Left cardiac atrium (tissue), 4 donors: ENCODE measurements at regions of chr1 and their contacts with region 1.

Region 1: DNA sequence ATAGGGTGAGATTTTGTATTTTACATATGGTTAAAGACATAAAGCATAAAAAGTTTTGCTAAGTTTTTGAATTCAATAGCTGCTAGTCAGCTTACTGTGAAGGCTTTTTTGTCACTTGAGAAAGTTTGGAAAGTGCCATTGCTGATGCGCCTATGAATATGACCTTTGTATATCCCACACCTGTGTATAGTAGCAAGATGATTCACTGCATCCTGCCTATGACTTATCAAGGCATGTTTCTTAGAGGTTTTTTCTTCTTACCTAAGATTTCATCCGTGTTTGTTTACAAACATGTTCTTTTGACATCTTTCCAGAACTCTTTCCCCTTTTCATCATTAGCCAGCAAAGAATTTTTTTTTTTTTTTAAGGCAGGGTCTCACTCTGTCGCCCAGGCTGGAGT is 51.5 kb downstream of the PRKAA2 start:
- DNase-seq: no peak
- ATAC-seq: no peak

Region 2: DNA sequence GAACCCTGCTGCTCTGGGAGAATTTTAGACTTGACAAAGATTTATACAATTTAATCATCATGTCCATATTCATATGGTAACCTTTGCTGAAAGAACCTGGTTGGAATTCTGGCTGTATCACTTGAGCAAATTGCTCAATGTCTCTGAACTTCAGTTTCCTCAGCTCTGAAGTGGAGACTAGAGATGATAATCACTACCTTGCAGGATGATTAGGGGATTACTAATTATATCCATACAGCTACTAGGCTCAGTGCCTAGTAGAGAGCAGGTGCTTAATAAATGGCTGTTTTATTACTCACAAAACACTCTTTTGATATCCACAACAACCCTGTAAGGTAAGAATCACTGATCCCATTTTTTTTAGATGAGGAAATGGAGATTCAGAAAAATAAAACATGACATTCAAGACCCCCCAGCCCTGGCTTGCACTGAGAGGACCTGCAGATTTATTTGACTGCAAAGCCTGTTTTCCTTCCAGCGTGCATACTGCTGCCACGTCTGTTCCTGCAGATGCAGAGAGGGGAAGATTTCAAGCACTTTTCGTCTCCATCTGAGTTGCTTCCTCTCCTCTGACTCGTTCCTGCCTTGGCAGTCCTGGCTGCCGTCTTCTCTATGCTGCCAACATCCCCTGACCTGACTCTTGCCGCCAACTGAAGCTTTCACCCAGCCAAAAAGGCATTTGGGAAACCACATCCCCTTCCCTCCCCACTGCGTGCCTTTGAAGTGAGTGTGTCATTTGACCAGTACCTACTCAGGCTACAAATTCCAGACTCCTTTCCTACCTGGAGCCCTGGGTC is 320.3 kb before region 1 on chr1:
- intact Hi-C with region 1: no loop called
- DNase-seq: peak; percentile 50
- ATAC-seq: peak; percentile 46 to 80

Region 3: DNA sequence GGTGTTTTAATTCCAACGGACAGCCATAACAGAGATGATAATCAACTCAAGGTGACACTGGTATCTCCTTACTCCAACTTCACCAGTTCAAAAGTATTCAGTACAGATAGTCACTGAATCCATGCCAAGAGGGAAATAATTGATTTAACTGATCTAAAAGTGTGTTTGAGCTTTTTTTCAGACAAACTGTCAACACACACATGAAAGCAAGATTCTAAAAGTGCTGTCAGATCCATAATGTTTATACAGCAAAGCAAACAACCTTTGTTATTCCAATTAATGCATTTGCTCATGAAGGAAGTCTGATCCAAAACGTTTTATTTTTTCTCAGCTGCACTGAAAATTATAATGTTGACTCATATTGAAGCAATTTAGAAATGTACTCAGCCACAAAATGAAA is 57.5 kb before region 1 on chr1:
- intact Hi-C with region 1: loop called (anchors 10 kb)
- DNase-seq: no peak
- ATAC-seq: no peak